ENCODE measurements at regions of chr5 and their contacts with region 1.

Region 1: GRCh38 chr5:169980418-169981053 is at the start of gene INSYN2B:
- DNase-seq: peak; percentile 96
- H3K4me3 ChIP-seq: peak within 1 kb of the TSS; percentile 47 to 99 (median 97)
- H3K27ac ChIP-seq: peak within 1 kb of the TSS; percentile 97
- H3K4me1 ChIP-seq: peaks cover 41% of the 10 kb centered on the region
- H3K27me3 ChIP-seq: no peaks in the 10 kb centered on the region
- CTCF ChIP-seq: peak; percentile 65 to 66
- POLR2A ChIP-seq: peak; percentile 59
- total RNA-seq, gene INSYN2B: 8.2 and 9.9 TPM in 2 replicates

Region 2: DNA sequence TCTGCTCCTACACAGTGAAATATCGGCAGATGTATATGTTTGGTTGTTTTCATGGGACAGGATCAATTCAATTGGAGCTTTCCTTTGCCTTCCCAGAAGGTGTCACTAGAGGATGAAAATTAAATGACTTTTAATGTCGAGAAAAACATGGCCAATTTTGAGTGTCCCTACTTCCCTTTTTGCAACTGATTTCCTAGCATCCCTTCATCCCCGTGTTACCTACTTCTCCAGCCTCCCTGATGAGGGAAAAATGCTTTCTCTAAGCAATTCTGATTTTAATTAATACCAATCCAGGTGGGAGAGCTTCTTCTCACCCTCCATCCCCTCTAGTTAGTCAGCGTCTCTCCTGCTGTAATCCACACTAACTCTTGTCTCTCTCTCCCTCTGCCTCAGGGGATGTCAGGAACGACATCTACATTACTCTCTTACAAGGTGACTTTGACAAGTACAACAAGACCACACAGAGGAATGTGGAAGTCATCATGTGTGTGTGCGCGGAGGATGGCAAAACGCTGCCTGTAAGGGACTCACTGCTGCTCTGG is 278.6 kb before region 1 on chr5:
- CTCF ChIA-PET with region 1: interaction called, 180 read pairs
- POLR2A ChIA-PET with region 1: no interaction called
- dilution Hi-C with region 1: no loop called
- intact Hi-C with region 1: loop called (anchors 1 kb)
- DNase-seq: peak; percentile 45
- H3K4me3 ChIP-seq: no peak overlapping the region
- H3K27ac ChIP-seq: no peak overlapping the region
- H3K4me1 ChIP-seq: peaks cover 28% of the 10 kb centered on the region
- H3K27me3 ChIP-seq: no peaks in the 10 kb centered on the region
- CTCF ChIP-seq: peak; percentile 25 to 42
- POLR2A ChIP-seq: no peak

Region 3: DNA sequence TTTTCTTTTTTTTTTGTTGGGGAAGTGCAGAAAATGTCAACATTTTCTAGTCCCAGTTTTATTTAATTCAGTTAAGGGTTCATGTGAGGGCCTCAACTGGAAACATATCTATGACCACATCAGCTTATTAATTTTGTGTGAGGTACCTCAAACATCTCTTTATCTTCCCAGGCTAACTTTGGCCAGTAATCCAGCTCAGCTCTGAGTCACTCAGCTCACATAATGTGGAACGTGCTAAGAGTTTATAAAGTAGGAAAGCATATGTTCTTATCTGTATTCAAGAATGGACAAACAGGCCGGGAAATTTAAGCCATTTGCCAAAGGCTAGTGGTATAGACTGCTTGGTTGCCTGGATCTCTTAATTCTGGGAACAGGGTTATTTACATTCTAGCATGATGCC is 118.6 kb before region 1 on chr5:
- CTCF ChIA-PET with region 1: interaction called, 16 read pairs
- POLR2A ChIA-PET with region 1: no interaction called
- dilution Hi-C with region 1: no loop called
- intact Hi-C with region 1: loop called (anchors 2 kb)
- DNase-seq: no peak
- H3K4me3 ChIP-seq: no peak overlapping the region
- H3K27ac ChIP-seq: no peak overlapping the region
- H3K4me1 ChIP-seq: no peaks in the 10 kb centered on the region
- H3K27me3 ChIP-seq: no peaks in the 10 kb centered on the region
- CTCF ChIP-seq: no peak
- POLR2A ChIP-seq: no peak

Region 4: GRCh38 chr5:169904059-169904458 is 76.5 kb before region 1 on chr5:
- CTCF ChIA-PET with region 1: interaction called, 18 read pairs
- POLR2A ChIA-PET with region 1: no interaction called
- dilution Hi-C with region 1: no loop called
- intact Hi-C with region 1: no loop called
- DNase-seq: no peak
- H3K4me3 ChIP-seq: no peak overlapping the region
- H3K27ac ChIP-seq: no peak overlapping the region
- H3K4me1 ChIP-seq: no peaks in the 10 kb centered on the region
- H3K27me3 ChIP-seq: no peaks in the 10 kb centered on the region
- CTCF ChIP-seq: no peak
- POLR2A ChIP-seq: no peak

Region 5: DNA sequence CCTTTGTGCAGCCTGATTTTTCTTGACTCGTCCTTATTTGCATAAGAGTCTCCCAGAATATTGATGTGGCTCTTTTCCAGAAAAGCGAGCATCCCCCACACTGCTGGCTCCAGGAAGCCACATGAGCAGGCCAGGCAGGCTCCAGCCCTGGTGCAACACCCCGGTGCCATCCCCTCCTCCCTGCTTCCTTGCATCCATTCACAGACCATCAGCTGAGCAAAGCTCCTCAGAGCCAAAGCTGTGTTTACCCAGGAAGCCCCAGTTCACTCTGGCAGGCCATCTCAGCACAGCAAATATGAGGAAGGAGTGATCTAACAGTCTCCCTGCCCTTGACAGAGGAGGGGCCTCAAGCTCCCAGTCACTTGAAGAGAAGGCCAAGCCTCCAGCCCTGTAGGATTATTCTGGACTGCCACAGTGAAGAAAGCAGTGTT is 34.7 kb before region 1 on chr5:
- CTCF ChIA-PET with region 1: interaction called, 64 read pairs
- POLR2A ChIA-PET with region 1: interaction called, 3 read pairs
- dilution Hi-C with region 1: no loop called
- intact Hi-C with region 1: loop called (anchors 1 kb)
- DNase-seq: peak; percentile 61
- H3K4me3 ChIP-seq: no peak overlapping the region
- H3K27ac ChIP-seq: peak overlapping the region; percentile 48
- H3K4me1 ChIP-seq: peaks cover 12% of the 10 kb centered on the region
- H3K27me3 ChIP-seq: no peaks in the 10 kb centered on the region
- CTCF ChIP-seq: no peak
- POLR2A ChIP-seq: no peak

Region 6: GRCh38 chr5:170070556-170071412 is 90.2 kb after region 1 on chr5:
- CTCF ChIA-PET with region 1: interaction called, 35 read pairs
- POLR2A ChIA-PET with region 1: interaction called, 3 read pairs
- dilution Hi-C with region 1: no loop called
- intact Hi-C with region 1: loop called (anchors 2 kb)
- DNase-seq: peak; percentile 56
- H3K4me3 ChIP-seq: no peak overlapping the region
- H3K27ac ChIP-seq: no peak overlapping the region
- H3K4me1 ChIP-seq: peaks cover 11% of the 10 kb centered on the region
- H3K27me3 ChIP-seq: no peaks in the 10 kb centered on the region
- CTCF ChIP-seq: peak; percentile 62 to 91
- POLR2A ChIP-seq: no peak

Region 7: GRCh38 chr5:170691657-170692056 is 711.1 kb after region 1 on chr5:
- CTCF ChIA-PET with region 1: no interaction called
- POLR2A ChIA-PET with region 1: no interaction called
- dilution Hi-C with region 1: no loop called
- intact Hi-C with region 1: no loop called
- DNase-seq: no peak
- H3K4me3 ChIP-seq: no peak overlapping the region
- H3K27ac ChIP-seq: no peak overlapping the region
- H3K4me1 ChIP-seq: no peaks in the 10 kb centered on the region
- H3K27me3 ChIP-seq: peaks cover 0 to 5% of the 10 kb centered on the region in 2 experiments
- CTCF ChIP-seq: no peak
- POLR2A ChIP-seq: no peak

Region 8: GRCh38 chr5:171010086-171010485 is 1029.5 kb after region 1 on chr5:
- CTCF ChIA-PET with region 1: no interaction called
- POLR2A ChIA-PET with region 1: no interaction called
- dilution Hi-C with region 1: no loop called
- intact Hi-C with region 1: no loop called
- DNase-seq: no peak
- H3K4me3 ChIP-seq: no peak overlapping the region
- H3K27ac ChIP-seq: no peak overlapping the region
- H3K4me1 ChIP-seq: no peaks in the 10 kb centered on the region
- H3K27me3 ChIP-seq: no peaks in the 10 kb centered on the region
- CTCF ChIP-seq: no peak
- POLR2A ChIP-seq: no peak

Measured in endothelial cell of umbilical vein (primary cell).